Heart right ventricle (tissue), 16 donors: ENCODE measurements at regions of chr1 and their contacts with region 1.

Region 1: GRCh38 chr1:175481126-175482066 is 262.0 kb downstream of the TNR start:
- DNase-seq: no peak
- ATAC-seq: peak in 5 of 8 donors; percentile 44 to 62 (median 52)
- H3K4me3 ChIP-seq: no peak overlapping the region
- H3K27ac ChIP-seq: no peak overlapping the region
- H3K4me1 ChIP-seq: peaks cover 0 to 4% (median 0%) of the 10 kb centered on the region in 9 donors
- H3K27me3 ChIP-seq: peaks cover 0 to 13% (median 0%) of the 10 kb centered on the region in 7 donors
- CTCF ChIP-seq: peak; percentile 37 to 71 (median 66)

Region 2: DNA sequence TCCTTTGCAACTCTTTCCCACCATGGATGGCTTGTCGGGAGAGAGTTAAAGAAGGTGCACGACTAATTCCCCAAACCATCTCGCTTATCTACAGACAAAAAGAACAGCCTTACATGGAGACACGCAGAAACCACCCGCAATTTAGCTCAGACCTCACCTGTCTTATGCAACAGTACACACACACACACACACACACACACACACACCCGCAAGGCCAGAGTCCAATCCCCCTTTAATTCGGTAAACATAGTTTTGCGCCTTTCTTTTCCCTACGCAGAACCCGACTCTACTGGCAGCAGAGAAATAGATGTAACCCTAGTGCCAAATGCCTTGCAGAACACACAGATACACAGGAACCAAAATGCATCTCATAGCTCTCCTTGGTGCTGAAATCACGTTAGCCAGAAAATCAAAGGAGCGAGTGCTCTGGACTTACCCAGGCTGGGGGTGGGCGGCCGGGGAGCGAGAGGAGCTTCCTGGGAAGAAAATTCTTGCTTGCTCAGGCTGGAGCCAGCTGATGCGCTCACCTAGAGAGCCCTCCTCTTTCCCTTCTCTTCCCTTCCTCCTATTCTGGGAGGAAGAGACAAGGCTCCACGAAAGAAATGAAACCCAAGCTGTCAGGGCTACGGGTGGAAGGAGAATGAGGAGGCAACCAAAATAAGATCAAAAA is 261.5 kb after region 1 on chr1:
- intact Hi-C with region 1: loop called in 5 of 10 experiments (anchors 10 kb)
- DNase-seq: peak in 1 of 2 donors; percentile 6
- ATAC-seq: peak in 6 of 8 donors; percentile 38 to 74 (median 58)
- H3K4me3 ChIP-seq: no peak overlapping the region
- H3K27ac ChIP-seq: no peak overlapping the region
- H3K4me1 ChIP-seq: peaks cover 0 to 4% (median 0%) of the 10 kb centered on the region in 9 donors
- H3K27me3 ChIP-seq: peaks cover 0 to 49% (median 13%) of the 10 kb centered on the region in 7 donors
- CTCF ChIP-seq: no peak

Region 3: GRCh38 chr1:175757381-175758015 is 276.1 kb after region 1 on chr1:
- intact Hi-C with region 1: loop called in 1 of 10 experiments (anchors 10 kb)
- DNase-seq: peak in 1 of 2 donors; percentile 25
- ATAC-seq: peak in 2 of 8 donors; percentile 42 to 55
- H3K4me3 ChIP-seq: no peak overlapping the region
- H3K27ac ChIP-seq: no peak overlapping the region
- H3K4me1 ChIP-seq: no peaks in the 10 kb centered on the region
- H3K27me3 ChIP-seq: peaks cover 0 to 16% (median 0%) of the 10 kb centered on the region in 7 donors
- CTCF ChIP-seq: peak; percentile 41 to 83 (median 70)

Region 4: DNA sequence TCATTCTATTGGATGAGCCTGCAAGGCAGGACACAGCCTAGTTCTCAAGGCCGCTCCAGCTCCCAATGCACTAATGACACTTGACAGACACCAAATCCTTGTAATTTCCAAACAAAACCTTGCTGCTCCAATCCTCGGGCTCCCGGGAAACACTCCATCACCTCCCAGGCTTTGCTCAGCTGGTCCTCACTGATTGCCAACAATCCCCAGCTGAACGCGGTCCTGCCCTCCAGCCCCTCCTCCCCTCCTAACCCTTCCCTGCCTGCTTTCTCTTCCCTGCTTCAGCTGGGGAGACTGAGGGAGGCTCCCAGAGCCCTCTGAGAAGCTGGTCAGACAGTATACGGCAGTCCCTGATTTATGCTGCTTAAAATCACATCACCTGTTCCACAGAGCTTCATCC is 376.4 kb after region 1 on chr1:
- intact Hi-C with region 1: no loop called
- DNase-seq: no peak
- ATAC-seq: peak in 2 of 8 donors; percentile 20 to 38
- H3K4me3 ChIP-seq: no peak overlapping the region
- H3K27ac ChIP-seq: no peak overlapping the region
- H3K4me1 ChIP-seq: no peaks in the 10 kb centered on the region
- H3K27me3 ChIP-seq: peaks cover 0 to 8% (median 0%) of the 10 kb centered on the region in 7 donors
- CTCF ChIP-seq: no peak

Region 5: DNA sequence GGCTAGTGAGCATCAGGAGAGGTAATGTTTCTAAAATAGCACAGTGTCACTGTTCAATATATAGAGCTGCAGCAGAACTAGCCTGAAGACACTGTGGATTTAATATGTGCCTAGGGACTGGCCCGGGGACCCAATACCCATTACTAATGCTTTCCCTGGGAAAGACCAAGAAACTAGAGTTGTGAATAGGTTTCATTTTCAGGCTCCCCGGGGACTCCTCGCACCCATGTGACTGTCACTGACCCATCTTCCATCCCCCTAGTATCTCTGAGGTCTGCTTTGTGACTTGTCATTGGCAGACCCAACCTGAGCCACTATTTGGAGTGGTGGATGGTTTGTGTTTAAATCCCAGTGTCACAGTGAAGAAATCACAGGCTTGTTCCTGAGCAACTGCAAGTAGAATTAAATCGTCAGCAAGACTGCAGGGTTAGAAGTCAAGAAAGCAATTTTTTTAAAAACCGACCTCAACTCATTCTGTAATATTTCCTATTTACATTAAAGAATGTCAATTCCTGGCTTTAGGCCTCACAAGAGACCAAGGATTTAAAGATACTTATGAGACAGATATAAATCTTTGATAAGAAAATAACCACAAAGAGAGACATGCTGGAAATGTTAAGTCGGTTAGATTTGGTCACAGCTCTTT is 392.0 kb after region 1 on chr1:
- intact Hi-C with region 1: loop called in 1 of 10 experiments (anchors 10 kb)
- DNase-seq: no peak
- ATAC-seq: no peak
- H3K4me3 ChIP-seq: no peak overlapping the region
- H3K27ac ChIP-seq: no peak overlapping the region
- H3K4me1 ChIP-seq: peaks cover 0 to 12% (median 0%) of the 10 kb centered on the region in 9 donors
- H3K27me3 ChIP-seq: no peaks in the 10 kb centered on the region
- CTCF ChIP-seq: no peak